ENCODE measurements at regions of chr7 and their contacts with region 1.

Region 1: DNA sequence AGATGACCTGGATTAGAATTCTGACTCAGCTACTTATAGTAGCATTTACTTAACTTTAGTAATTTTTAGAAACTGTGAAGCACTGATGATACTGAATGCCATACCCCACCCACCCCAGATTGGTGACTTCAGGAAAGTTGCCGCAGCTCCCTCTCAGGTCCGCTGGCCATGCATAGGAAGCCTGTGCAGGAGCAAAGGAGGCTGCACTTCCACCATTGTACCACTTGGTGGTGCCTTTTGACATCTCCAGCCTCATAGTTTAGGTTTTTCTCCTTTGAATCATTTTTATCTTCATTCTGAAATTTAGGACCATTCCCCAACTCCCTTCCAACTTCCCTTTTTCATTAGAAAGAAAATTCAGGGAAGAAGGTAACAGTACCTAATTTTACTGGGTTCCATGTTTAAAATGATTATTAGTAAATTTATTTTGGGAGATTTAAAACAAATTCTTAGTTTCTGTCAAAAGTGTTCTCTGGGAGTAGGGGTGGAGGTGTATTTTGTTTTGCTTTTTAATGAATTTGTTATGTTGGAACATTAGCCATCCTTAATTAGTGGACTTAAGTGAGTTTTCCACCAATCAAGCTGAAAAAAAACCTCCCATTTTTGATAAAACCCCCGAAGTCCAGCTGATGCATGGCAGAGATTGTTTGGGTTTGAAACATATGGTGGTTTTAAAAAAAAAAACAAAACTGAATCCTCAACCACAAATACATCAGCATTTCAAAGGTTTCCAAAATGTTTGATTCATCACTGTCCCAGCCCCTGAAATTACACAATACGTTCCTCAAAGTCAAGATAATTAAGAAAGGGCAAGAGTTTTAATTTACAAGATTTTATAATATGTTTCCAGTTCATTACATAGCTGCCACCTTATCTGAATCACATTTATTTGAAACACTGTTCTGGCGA is 109.6 kb downstream of the WNT2 start:
- DNase-seq: peak; percentile 46
- ATAC-seq: peak; percentile 67
- H3K4me3 ChIP-seq: no peak overlapping the region
- H3K4me3 Mint-ChIP-seq: no peak overlapping the region
- H3K27ac ChIP-seq: no peak overlapping the region
- H3K27ac Mint-ChIP-seq: no peak overlapping the region
- H3K4me1 ChIP-seq: no peaks in the 10 kb centered on the region
- H3K4me1 Mint-ChIP-seq: no peaks in the 10 kb centered on the region
- H3K27me3 ChIP-seq: no peaks in the 10 kb centered on the region
- H3K27me3 Mint-ChIP-seq: no peaks in the 10 kb centered on the region
- CTCF ChIP-seq: peak; percentile 92

Region 2: GRCh38 chr7:116138202-116138801 is 1074.9 kb before region 1 on chr7:
- CTCF ChIA-PET with region 1: no interaction called
- POLR2A ChIA-PET with region 1: no interaction called
- intact Hi-C with region 1: no loop called
- DNase-seq: peak; percentile 74
- ATAC-seq: peak; percentile 85
- H3K4me3 ChIP-seq: no peak overlapping the region
- H3K4me3 Mint-ChIP-seq: no peak overlapping the region
- H3K27ac ChIP-seq: no peak overlapping the region
- H3K27ac Mint-ChIP-seq: no peak overlapping the region
- H3K4me1 ChIP-seq: peaks cover 6 to 7% of the 10 kb centered on the region in 2 donors
- H3K4me1 Mint-ChIP-seq: peaks cover 23% of the 10 kb centered on the region
- H3K27me3 ChIP-seq: no peaks in the 10 kb centered on the region
- H3K27me3 Mint-ChIP-seq: no peaks in the 10 kb centered on the region
- CTCF ChIP-seq: peak; percentile 89

Region 3: GRCh38 chr7:118153551-118154177 is 940.4 kb after region 1 on chr7:
- CTCF ChIA-PET with region 1: interaction called, 4 read pairs
- POLR2A ChIA-PET with region 1: no interaction called
- intact Hi-C with region 1: loop called (anchors 2 kb)
- DNase-seq: peak; percentile 44
- ATAC-seq: no peak
- H3K4me3 ChIP-seq: no peak overlapping the region
- H3K4me3 Mint-ChIP-seq: no peak overlapping the region
- H3K27ac ChIP-seq: no peak overlapping the region
- H3K27ac Mint-ChIP-seq: no peak overlapping the region
- H3K4me1 ChIP-seq: no peaks in the 10 kb centered on the region
- H3K4me1 Mint-ChIP-seq: no peaks in the 10 kb centered on the region
- H3K27me3 ChIP-seq: peaks cover 0 to 13% (median 4%) of the 10 kb centered on the region in 4 experiments
- H3K27me3 Mint-ChIP-seq: no peaks in the 10 kb centered on the region
- CTCF ChIP-seq: peak; percentile 85

Measured in B cell (primary cell).